ENCODE measurements at regions of chr20 and their contacts with region 1.

Region 1: GRCh38 chr20:41955999-41956705 is 338.0 kb upstream of the CHD6 start:
- DNase-seq: peak; percentile 31
- H3K4me3 ChIP-seq: no peak overlapping the region
- H3K27ac ChIP-seq: no peak overlapping the region
- H3K4me1 ChIP-seq: no peaks in the 10 kb centered on the region
- H3K27me3 ChIP-seq: no peaks in the 10 kb centered on the region
- CTCF ChIP-seq: peak; percentile 53 to 64
- POLR2A ChIP-seq: no peak

Region 2: GRCh38 chr20:41357424-41358163 is 598.6 kb before region 1 on chr20:
- CTCF ChIA-PET with region 1: no interaction called
- POLR2A ChIA-PET with region 1: no interaction called
- dilution Hi-C with region 1: no loop called
- intact Hi-C with region 1: no loop called
- DNase-seq: no peak
- H3K4me3 ChIP-seq: no peak overlapping the region
- H3K27ac ChIP-seq: no peak overlapping the region
- H3K4me1 ChIP-seq: no peaks in the 10 kb centered on the region
- H3K27me3 ChIP-seq: no peaks in the 10 kb centered on the region
- CTCF ChIP-seq: no peak
- POLR2A ChIP-seq: no peak

Region 3: DNA sequence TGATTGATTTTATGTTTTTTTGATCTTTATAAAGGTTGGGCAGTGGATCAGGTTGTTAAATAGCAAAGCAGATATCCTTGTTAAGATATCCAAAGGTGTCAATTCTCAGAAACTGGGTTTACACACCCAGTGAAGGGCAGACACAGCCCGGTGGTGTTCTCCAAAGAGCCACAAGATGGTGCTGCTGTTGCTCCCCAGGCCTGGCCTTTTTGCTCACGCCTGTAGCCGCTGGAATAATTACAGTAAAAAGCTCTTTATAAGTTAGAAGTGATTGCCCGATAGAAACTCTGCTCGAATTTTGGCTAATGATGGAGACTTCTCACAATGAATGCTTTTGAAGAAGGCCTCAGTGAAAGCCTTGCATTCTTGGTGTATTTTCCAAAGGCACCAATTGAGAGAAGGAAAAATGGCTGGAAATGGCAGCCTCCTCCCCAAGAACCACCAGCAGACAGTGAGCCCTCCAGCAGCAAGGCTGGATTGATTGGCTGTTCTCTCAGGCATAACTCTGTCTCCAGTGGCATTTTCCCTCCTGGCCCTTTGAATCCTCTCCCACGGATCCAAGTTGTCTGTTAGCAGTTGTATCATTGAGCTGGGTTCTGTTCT is 217.4 kb before region 1 on chr20:
- CTCF ChIA-PET with region 1: interaction called, 20 read pairs
- POLR2A ChIA-PET with region 1: no interaction called
- dilution Hi-C with region 1: no loop called
- intact Hi-C with region 1: loop called (anchors 10 kb)
- DNase-seq: peak; percentile 38
- H3K4me3 ChIP-seq: no peak overlapping the region
- H3K27ac ChIP-seq: no peak overlapping the region
- H3K4me1 ChIP-seq: no peaks in the 10 kb centered on the region
- H3K27me3 ChIP-seq: no peaks in the 10 kb centered on the region
- CTCF ChIP-seq: peak; percentile 73 to 81
- POLR2A ChIP-seq: no peak

Region 4: DNA sequence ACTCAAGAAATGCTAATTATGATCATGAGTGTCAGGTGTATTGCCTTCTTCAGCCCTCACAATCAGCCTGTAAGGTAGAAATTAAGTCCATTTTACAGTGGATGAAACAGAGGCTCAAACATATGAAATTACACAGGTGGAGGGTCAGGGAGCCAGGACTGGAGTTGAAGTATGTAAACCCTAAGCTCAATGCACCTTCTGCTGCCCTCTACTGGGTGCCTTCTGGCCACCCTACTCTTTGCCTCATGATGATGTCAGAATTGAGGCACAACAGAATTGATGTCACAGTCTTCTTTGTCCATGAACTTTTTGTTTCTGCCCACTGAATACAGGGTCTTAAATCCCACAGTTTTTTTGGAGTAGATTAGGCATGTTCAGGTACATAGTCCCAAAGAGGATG is 62.8 kb after region 1 on chr20:
- CTCF ChIA-PET with region 1: interaction called, 56 read pairs
- POLR2A ChIA-PET with region 1: no interaction called
- dilution Hi-C with region 1: no loop called
- intact Hi-C with region 1: loop called (anchors 1 kb)
- DNase-seq: peak; percentile 14
- H3K4me3 ChIP-seq: no peak overlapping the region
- H3K27ac ChIP-seq: no peak overlapping the region
- H3K4me1 ChIP-seq: no peaks in the 10 kb centered on the region
- H3K27me3 ChIP-seq: no peaks in the 10 kb centered on the region
- CTCF ChIP-seq: peak in 1 of 2 donors; percentile 18
- POLR2A ChIP-seq: no peak

Region 5: DNA sequence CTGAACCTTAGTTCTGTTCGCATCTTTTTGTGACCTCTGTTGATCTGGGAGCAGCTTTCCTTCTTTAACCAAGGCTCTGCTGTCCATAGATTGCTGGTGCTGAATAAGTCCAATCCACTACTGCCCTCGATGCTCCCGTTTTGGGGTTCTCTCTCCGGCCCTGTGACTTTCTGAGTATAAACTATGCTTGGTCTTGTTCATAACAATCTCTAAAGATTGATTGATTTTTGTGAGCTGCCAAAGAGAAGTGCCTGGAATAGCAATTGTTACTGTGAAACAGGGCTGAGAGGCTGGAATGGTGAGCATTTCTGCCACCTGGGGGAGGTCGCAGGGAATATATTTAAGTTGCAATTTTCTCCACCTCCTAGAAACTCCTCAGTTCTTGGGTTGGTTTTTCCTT is 84.9 kb after region 1 on chr20:
- CTCF ChIA-PET with region 1: interaction called, 17 read pairs
- POLR2A ChIA-PET with region 1: no interaction called
- dilution Hi-C with region 1: no loop called
- intact Hi-C with region 1: no loop called
- DNase-seq: no peak
- H3K4me3 ChIP-seq: no peak overlapping the region
- H3K27ac ChIP-seq: no peak overlapping the region
- H3K4me1 ChIP-seq: no peaks in the 10 kb centered on the region
- H3K27me3 ChIP-seq: no peaks in the 10 kb centered on the region
- CTCF ChIP-seq: no peak
- POLR2A ChIP-seq: no peak

Region 6: GRCh38 chr20:43187476-43188233 is 1231.5 kb after region 1 on chr20:
- CTCF ChIA-PET with region 1: interaction called, 50 read pairs
- POLR2A ChIA-PET with region 1: no interaction called
- dilution Hi-C with region 1: no loop called
- intact Hi-C with region 1: no loop called
- DNase-seq: peak; percentile 58
- H3K4me3 ChIP-seq: no peak overlapping the region
- H3K27ac ChIP-seq: no peak overlapping the region
- H3K4me1 ChIP-seq: no peaks in the 10 kb centered on the region
- H3K27me3 ChIP-seq: peaks cover 11 to 15% of the 10 kb centered on the region in 2 experiments
- CTCF ChIP-seq: peak; percentile 83 to 87
- POLR2A ChIP-seq: no peak

Region 7: GRCh38 chr20:43408848-43409576 is 1452.9 kb after region 1 on chr20:
- CTCF ChIA-PET with region 1: interaction called, 32 read pairs
- POLR2A ChIA-PET with region 1: no interaction called
- dilution Hi-C with region 1: no loop called
- intact Hi-C with region 1: loop called (anchors 2 kb)
- DNase-seq: peak; percentile 38
- H3K4me3 ChIP-seq: no peak overlapping the region
- H3K27ac ChIP-seq: no peak overlapping the region
- H3K4me1 ChIP-seq: no peaks in the 10 kb centered on the region
- H3K27me3 ChIP-seq: no peaks in the 10 kb centered on the region
- CTCF ChIP-seq: peak; percentile 52 to 56
- POLR2A ChIP-seq: no peak

Measured in endothelial cell of umbilical vein (primary cell).